Transverse colon (tissue), 4 donors: ENCODE measurements at regions of chr3 and their contacts with region 1.

Region 1: GRCh38 chr3:192444096-192444790 is 283.1 kb downstream of the FGF12 start:
- DNase-seq: peak; percentile 45
- H3K4me3 ChIP-seq: no peak overlapping the region
- H3K27ac ChIP-seq: no peak overlapping the region
- H3K4me1 ChIP-seq: no peaks in the 10 kb centered on the region
- H3K27me3 ChIP-seq: peaks cover 17% of the 10 kb centered on the region
- CTCF ChIP-seq: peak; percentile 76 to 95 (median 95)
- EP300 ChIP-seq: no peak
- POLR2A ChIP-seq: no peak

Region 2: GRCh38 chr3:191412759-191413158 is 1031.5 kb before region 1 on chr3:
- in situ Hi-C with region 1: loop called (anchors 25 kb)
- intact Hi-C with region 1: no loop called
- DNase-seq: no peak
- H3K4me3 ChIP-seq: no peak overlapping the region
- H3K27ac ChIP-seq: no peak overlapping the region
- H3K4me1 ChIP-seq: no peaks in the 10 kb centered on the region
- H3K27me3 ChIP-seq: no peaks in the 10 kb centered on the region
- CTCF ChIP-seq: no peak
- EP300 ChIP-seq: no peak
- POLR2A ChIP-seq: no peak

Region 3: DNA sequence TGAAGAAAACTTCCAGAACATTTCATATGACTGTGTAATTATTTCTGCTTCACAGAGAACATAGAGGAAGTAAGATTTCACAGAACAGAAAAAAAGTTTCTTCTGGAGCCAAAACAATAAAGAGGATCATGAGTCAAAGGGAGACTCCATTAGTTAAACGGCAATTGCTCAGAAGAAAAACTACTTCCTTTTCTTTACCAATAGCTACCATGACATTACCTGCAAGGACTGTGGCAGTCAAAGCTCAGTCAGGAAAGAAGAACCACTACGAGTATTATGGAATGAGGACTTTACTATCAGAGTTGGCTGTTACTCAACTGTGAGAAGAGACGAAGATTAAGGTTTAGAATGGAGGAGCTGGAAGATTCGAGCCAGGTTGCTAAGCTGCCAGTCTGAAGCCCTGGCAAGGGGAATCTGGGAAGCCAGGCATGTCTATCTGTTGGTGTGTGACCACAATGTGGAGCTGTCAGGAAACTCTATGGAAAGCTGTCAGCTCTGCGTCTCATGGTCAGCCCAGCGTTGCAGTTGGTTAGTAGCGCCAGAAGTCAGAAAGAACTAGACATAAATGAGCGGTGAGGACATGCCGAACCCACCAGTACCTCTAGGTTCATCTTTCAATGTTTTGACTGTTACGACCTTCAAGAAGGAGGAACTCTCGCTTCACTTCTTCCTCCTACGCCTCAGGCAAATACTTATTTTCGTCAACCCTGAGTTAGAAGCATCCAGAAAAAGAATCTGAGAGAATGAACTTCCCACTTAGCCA is 321.2 kb before region 1 on chr3:
- in situ Hi-C with region 1: loop called in 1 of 4 experiments (anchors 25 kb)
- intact Hi-C with region 1: no loop called
- DNase-seq: no peak
- H3K4me3 ChIP-seq: no peak overlapping the region
- H3K27ac ChIP-seq: no peak overlapping the region
- H3K4me1 ChIP-seq: no peaks in the 10 kb centered on the region
- H3K27me3 ChIP-seq: no peaks in the 10 kb centered on the region
- CTCF ChIP-seq: no peak
- EP300 ChIP-seq: no peak
- POLR2A ChIP-seq: no peak

Region 4: DNA sequence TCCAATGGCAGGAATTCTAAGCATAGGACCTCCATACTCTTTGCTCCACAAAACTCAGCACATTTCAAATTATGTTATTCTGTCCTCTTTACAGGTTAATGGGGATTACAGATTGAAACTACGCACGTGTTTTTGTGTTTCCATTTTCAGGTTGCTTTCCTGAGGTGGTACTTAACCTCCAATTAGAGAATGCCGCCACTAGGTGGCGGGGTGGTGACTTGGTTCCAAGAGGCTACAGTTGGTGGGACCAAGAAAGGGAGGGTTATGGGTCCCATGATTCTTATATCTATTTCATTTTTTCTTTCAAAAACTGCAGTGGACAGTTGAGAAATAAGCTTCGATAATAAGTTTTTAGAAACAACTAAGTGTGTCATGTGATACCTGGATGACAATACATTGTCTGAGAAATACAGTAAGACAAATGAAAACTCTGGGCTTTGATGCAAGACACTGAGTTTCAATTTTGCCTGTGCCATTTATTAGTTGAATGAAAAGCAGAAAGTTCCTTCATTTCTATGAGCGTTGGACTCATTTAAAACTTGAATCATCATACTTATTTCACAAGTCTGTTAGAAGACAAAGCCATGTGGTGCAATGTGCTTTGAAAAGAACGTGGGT is 255.9 kb before region 1 on chr3:
- in situ Hi-C with region 1: loop called in 1 of 4 experiments (anchors 25 kb)
- intact Hi-C with region 1: no loop called
- DNase-seq: peak; percentile 28
- H3K4me3 ChIP-seq: no peak overlapping the region
- H3K27ac ChIP-seq: no peak overlapping the region
- H3K4me1 ChIP-seq: no peaks in the 10 kb centered on the region
- H3K27me3 ChIP-seq: no peaks in the 10 kb centered on the region
- CTCF ChIP-seq: peak; percentile 27 to 58 (median 47)
- EP300 ChIP-seq: no peak
- POLR2A ChIP-seq: no peak

Region 5: DNA sequence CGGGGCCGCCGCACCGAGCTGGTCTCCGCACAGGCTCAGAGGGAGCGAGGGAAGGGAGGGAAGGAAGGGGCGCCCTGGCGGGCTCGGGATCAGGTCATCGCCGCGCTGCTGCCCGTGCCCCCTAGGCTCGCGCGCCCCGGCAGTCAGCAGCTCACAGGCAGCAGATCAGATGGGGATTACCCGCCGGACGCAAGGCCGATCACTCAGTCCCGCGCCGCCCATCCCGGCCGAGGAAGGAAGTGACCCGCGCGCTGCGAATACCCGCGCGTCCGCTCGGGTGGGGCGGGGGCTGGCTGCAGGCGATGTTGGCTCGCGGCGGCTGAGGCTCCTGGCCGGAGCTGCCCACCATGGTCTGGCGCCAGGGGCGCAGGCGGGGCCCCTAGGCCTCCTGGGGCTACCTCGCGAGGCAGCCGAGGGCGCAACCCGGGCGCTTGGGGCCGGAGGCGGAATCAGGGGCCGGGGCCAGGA is 34.9 kb before region 1 on chr3:
- in situ Hi-C with region 1: no loop called
- intact Hi-C with region 1: no loop called
- DNase-seq: no peak
- H3K4me3 ChIP-seq: peak overlapping the region in 3 of 4 donors; percentile 26 to 49 (median 33)
- H3K27ac ChIP-seq: peak overlapping the region in 2 of 4 donors; percentile 8 to 24
- H3K4me1 ChIP-seq: peaks cover 0 to 10% (median 3%) of the 10 kb centered on the region in 4 donors
- H3K27me3 ChIP-seq: peaks cover 54% of the 10 kb centered on the region
- CTCF ChIP-seq: no peak
- EP300 ChIP-seq: no peak
- POLR2A ChIP-seq: no peak